ENCODE measurements at regions of chr16 and their contacts with region 1.

Region 1: GRCh38 chr16:68319185-68319908 is 8.5 kb downstream of the PRMT7 start:
- DNase-seq: no peak
- H3K4me3 ChIP-seq: no peak overlapping the region
- CTCF ChIP-seq: no peak

Region 2: GRCh38 chr16:68396481-68396880 is 77.1 kb after region 1 on chr16:
- in situ Hi-C with region 1: loop called (anchors 5 kb)
- DNase-seq: no peak
- H3K4me3 ChIP-seq: no peak overlapping the region
- CTCF ChIP-seq: peak; percentile 52

Measured in astrocyte of the cerebellum (primary cell).